HEK293 (cell line): ENCODE measurements at regions of chr19 and their contacts with region 1.

Region 1: GRCh38 chr19:19488875-19489690 is 26.3 kb downstream of the TSSK6 start:
- H3K4me3 ChIP-seq: no peak overlapping the region; the same call in 1 of the 2 replicates
- H3K27ac ChIP-seq: no peak overlapping the region; the same call in 1 of the 2 replicates
- H3K4me1 ChIP-seq: peaks cover 11% of the 10 kb centered on the region
- CTCF ChIP-seq: no peak

Region 2: DNA sequence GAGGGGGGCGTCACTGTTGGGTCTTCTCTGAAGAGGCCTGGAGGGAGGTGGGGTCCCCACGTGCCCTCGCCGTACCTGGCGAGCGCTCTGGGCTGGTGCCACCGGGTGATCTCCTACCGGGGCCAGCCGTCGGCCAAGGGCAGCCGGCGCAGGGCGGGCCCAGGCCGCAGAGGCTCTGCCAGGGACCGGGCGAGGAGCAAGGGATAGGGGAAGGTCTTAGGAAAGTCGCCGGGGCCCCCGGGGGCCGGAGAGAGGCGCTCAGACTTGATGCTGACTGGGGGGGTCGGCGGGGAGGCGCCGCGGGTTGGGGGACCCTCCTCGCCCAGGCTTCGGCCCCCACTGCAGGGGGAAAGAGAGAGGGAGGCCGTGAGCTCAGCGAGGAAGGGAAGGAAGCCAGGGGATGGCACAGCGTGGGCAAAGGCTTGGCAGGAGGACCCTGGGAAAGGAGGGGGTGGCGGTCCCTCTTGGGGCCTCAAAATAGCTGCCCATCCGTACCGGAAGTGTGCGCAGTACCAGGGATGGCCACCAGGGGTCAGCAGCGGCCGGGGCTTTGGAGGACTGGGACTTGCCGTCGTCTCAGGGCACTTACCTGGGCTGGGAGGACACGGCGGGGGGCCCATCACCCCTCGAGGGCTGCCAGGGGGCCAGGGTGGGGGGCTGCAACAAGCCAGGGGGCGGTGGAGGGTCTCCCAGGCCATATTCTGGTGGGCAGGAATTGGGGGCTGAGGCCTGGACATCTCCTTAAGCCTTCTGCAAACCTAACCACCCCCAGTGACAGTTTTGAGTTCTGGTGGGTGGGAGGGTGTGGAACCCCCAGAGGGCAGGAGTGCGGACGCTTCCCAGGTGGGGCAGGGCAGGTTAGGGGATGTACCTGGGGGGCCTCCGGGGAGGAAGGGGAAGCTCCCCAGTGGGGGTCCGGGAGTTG is 343.1 kb before region 1 on chr19:
- CTCF ChIA-PET with region 1: interaction called, 11 read pairs
- POLR2A ChIA-PET with region 1: no interaction called
- H3K4me3 ChIP-seq: no peak overlapping the region
- H3K27ac ChIP-seq: no peak overlapping the region
- H3K4me1 ChIP-seq: no peaks in the 10 kb centered on the region
- CTCF ChIP-seq: peak; percentile 81

Region 3: GRCh38 chr19:19361075-19361594 is 127.9 kb before region 1 on chr19:
- CTCF ChIA-PET with region 1: interaction called, 49 read pairs
- POLR2A ChIA-PET with region 1: interaction called, 4 read pairs
- H3K4me3 ChIP-seq: no peak overlapping the region
- H3K27ac ChIP-seq: no peak overlapping the region
- H3K4me1 ChIP-seq: no peaks in the 10 kb centered on the region; the same call in none of the 2 replicates
- CTCF ChIP-seq: peak; percentile 74; the same call in 1 of the 2 replicates

Region 4: GRCh38 chr19:19374962-19375823 is 113.9 kb before region 1 on chr19:
- CTCF ChIA-PET with region 1: interaction called, 21 read pairs
- POLR2A ChIA-PET with region 1: no interaction called
- H3K4me3 ChIP-seq: no peak overlapping the region
- H3K27ac ChIP-seq: no peak overlapping the region
- H3K4me1 ChIP-seq: peaks cover 4% of the 10 kb centered on the region; the same call in 1 of the 2 replicates
- CTCF ChIP-seq: no peak

Region 5: DNA sequence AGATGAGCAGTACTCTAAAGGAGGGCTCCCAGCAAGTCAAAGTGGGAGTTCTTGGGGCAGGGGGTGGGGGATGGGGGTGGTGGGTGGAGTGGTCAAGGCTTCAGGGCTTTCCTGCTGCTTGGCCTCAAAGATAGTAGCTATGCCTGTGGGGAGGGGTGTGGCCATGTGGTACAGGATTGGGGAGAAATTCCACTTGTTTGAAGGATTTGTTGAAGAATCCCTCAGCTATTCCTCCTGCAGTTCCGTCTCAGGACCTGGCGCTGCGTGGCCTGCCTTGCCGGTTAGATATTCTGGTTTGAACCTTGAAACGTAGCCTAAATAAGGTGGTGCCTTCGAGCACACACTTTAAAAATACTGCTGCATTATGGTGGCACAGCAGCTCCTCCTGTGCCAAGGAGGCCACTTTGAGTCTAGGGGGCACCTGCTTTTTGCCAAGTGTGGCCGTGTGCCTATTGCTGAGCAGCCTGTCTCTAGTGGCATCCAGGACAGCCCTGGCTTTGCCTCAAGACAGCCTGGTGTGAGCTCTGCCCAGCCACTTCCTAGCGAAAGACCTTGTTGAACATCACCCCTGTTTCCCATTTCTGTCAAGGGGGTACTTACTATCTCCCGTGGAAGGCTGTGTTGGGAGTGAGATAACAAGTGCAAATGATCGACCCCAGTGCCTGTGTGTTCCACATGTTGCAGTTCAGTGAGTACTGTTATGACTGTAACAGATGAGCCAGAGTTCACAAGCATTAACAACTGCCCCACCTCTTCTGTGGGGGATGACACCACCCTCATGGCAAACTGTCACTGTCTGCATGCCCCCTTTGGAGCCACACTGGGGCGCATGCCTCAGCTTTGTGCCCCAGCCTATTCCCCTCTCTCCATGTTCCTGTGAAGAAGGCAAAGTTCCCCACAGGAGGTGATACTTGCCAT is 78.5 kb before region 1 on chr19:
- CTCF ChIA-PET with region 1: interaction called, 10 read pairs
- POLR2A ChIA-PET with region 1: interaction called, 10 read pairs
- H3K4me3 ChIP-seq: no peak overlapping the region
- H3K27ac ChIP-seq: no peak overlapping the region
- H3K4me1 ChIP-seq: peaks cover 13% of the 10 kb centered on the region; the same call in 1 of the 2 replicates
- CTCF ChIP-seq: no peak

Region 6: DNA sequence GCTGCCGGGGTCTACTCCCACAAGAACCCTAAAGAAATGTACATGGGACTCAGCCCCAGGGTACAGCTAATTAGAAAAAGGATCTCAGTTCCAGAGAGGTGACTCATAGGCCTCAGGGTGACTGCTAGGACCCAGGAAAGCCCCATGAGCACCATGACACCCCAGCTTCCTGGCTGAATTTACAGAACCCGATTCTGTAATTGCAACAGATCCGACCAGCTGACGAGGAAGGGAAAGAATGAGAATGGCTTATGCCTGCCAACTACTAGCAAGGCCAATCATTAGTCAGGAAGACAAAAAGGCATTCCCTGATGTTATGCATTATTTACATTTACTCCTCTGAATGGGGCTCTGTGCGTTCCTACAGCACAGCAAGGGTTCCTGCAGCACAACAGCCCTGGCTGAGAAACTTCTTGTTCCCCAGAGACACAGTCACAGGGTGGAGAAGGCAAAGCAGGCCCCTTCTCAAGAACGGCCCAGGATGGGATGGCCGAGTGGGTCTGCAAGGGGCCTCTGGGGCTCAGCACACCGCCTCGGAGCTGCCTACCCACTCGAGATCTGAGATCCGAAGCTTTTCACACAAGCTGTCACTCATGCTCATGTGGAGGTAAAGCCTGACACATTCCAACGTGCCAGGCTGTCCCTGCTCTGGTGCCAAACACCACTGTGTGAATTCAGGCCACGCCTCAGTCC is 102.2 kb after region 1 on chr19:
- CTCF ChIA-PET with region 1: no interaction called
- POLR2A ChIA-PET with region 1: no interaction called
- H3K4me3 ChIP-seq: no peak overlapping the region
- H3K27ac ChIP-seq: no peak overlapping the region
- H3K4me1 ChIP-seq: 0 out of 2 replicates have a peak, but pooled peaks cover 1% of the 10 kb centered on the region
- CTCF ChIP-seq: no peak

Region 7: GRCh38 chr19:19817357-19817756 is 328.3 kb after region 1 on chr19:
- CTCF ChIA-PET with region 1: no interaction called
- POLR2A ChIA-PET with region 1: no interaction called
- H3K4me3 ChIP-seq: no peak overlapping the region
- H3K27ac ChIP-seq: no peak overlapping the region
- H3K4me1 ChIP-seq: no peaks in the 10 kb centered on the region
- CTCF ChIP-seq: no peak